Activated naive CD4-positive, alpha-beta T cell treated with anti-CD3 and anti-CD28 coated beads for 36 hours (primary cell): ENCODE measurements at regions of chr21 and their contacts with region 1.

Region 1: GRCh38 chr21:27700974-27701614 is 734.2 kb upstream of the ADAMTS5 start:
- DNase-seq: peak; percentile 80
- H3K4me3 Mint-ChIP-seq: no peak overlapping the region
- H3K27ac Mint-ChIP-seq: no peak overlapping the region
- H3K4me1 Mint-ChIP-seq: peaks cover 2% of the 10 kb centered on the region
- H3K27me3 Mint-ChIP-seq: no peaks in the 10 kb centered on the region

Region 2: DNA sequence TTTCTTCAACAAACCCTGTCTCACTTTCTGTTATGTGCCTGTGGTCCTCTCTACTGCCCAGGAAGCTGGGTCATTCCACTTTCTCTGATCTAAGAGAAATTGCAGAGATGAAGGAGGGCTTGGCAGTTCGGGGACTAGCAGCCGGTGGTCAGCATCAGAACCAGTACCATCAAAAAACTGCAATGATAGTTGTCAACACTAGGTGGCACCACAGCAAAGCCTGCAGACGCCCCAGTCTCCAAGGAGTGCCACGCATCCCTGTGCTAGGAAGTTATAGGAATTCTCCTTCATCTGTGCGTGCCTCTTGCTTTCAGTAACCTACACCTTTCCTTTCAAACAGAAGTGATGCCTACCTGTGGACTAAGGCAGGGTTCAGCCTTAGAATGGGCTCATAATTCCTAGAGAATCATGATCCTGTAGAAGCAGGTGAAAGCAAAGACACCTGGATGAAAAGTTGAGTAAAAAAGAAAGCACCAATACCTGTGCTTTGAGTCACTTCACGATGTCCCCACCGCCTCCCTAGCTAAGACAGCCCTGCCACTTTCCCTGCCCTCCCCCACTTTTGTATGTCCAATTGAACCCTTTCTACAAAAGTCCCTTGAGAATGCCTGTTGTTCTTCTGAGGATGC is 985.1 kb before region 1 on chr21:
- CTCF ChIA-PET with region 1: no interaction called
- intact Hi-C with region 1: loop called (anchors 5 kb)
- DNase-seq: peak; percentile 30
- H3K4me3 Mint-ChIP-seq: no peak overlapping the region
- H3K27ac Mint-ChIP-seq: no peak overlapping the region
- H3K4me1 Mint-ChIP-seq: no peaks in the 10 kb centered on the region
- H3K27me3 Mint-ChIP-seq: peaks cover 10% of the 10 kb centered on the region

Region 3: DNA sequence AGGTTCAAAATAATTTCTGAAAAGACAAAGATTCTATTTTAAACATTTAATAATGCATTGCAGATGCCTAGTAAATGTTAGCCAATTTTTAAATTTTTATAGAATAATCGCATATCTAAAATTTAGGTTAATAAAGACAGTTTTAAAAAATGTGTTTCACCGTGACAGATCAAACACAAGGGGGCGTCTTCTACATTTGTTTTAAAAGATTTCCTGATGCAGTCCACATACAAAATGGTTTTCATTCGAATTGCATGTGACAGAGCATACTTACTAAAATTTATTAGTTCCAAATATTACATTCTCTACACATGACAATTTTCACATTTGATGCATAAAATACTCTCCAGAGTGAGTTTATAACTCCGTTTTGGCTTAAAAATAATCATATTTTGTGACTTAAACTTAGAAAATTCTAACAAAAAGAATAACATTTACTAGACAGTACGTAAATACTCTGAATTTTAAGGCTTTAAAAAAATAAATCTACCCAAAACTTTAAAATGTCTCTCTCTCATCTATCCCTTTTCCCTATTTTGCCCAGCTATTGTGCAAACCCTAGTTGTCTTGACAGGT is 931.4 kb before region 1 on chr21:
- CTCF ChIA-PET with region 1: no interaction called
- intact Hi-C with region 1: loop called (anchors 2 kb)
- DNase-seq: no peak
- H3K4me3 Mint-ChIP-seq: no peak overlapping the region
- H3K27ac Mint-ChIP-seq: no peak overlapping the region
- H3K4me1 Mint-ChIP-seq: no peaks in the 10 kb centered on the region
- H3K27me3 Mint-ChIP-seq: peaks cover 2% of the 10 kb centered on the region

Region 4: DNA sequence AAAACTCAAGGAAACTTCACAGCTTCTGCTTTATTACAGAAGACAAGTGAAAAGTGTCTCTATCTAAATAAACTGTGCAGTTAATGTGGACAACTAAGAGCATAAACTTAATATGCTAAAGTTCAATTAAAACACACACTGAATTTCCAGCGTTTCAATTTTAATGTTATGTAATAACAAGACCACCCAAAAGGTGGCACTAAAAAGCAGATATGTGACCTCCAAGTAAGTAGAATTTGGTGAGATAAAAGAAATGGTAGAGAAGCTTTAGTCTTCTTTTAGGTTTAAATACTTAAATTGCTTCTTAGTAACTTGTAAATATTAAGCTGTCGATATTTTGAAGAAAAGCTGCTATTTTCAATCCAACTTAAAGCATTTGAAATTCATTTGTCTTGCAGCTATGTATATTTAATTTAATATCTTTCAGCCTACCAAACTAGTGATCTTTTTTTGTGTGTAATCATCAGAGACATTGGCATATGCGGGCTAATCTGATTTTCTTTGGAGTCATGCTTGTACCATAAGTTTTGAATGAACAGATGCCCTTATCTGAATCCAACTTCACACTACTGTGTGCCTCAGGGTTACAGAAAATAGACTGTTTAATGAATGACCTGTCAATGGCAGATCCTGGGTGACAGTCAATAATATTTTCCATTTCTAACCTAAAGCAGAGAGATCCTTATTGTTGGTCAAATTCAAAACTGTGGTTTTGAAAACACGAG is 819.4 kb before region 1 on chr21:
- CTCF ChIA-PET with region 1: no interaction called
- intact Hi-C with region 1: loop called (anchors 1 kb)
- DNase-seq: no peak
- H3K4me3 Mint-ChIP-seq: no peak overlapping the region
- H3K27ac Mint-ChIP-seq: no peak overlapping the region
- H3K4me1 Mint-ChIP-seq: no peaks in the 10 kb centered on the region
- H3K27me3 Mint-ChIP-seq: peaks cover 12% of the 10 kb centered on the region

Region 5: DNA sequence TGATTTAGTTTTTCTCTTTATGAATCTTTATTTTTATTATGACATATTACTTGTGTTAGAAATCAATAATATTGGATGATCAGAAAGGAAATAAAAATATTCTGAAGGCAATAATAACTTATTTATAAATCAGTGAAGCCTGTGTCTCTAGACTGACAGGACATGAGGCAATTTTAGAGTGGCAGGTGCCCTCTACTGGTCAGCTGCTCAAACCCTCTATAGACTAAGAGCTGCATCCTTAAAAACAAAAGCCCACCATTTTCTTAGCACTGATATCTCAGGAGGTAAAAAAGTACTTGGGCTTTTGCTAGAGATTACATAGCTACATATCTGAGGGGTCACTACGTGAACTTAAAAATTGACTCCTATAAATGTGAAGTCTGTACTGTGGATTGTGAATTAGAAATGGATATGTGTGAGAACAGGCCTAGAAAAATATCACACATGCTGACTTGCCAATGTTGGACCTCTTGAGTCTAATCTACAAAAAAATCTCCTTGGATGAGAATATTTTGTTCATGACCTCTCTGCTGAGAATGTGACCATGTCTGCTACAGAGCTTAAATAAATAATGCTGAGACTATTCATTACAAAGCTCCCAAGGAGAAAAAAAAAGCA is 136.3 kb before region 1 on chr21:
- CTCF ChIA-PET with region 1: no interaction called
- intact Hi-C with region 1: loop called (anchors 5 kb)
- DNase-seq: peak; percentile 16
- H3K4me3 Mint-ChIP-seq: no peak overlapping the region
- H3K27ac Mint-ChIP-seq: no peak overlapping the region
- H3K4me1 Mint-ChIP-seq: no peaks in the 10 kb centered on the region
- H3K27me3 Mint-ChIP-seq: no peaks in the 10 kb centered on the region

Region 6: DNA sequence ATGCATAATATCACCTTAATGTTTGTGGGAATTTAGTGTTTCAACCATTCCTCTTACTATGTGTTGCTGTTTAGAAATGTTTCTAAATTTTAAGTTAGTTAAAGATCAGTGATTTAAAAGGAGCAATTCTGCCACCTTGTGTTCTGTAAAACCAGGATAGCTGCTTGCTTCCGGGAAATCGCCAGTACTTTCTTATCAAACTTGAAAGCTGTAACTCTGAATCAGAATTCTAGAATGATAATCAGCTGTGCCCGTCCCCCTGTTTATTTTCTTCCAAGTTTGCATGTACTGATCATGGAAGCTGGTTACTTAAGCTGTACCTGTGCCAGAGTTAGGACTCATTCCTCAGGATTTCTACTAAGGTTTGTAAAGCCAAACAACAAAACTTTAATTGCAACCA is 635.2 kb after region 1 on chr21:
- CTCF ChIA-PET with region 1: no interaction called
- intact Hi-C with region 1: loop called (anchors 2 kb)
- DNase-seq: no peak
- H3K4me3 Mint-ChIP-seq: no peak overlapping the region
- H3K27ac Mint-ChIP-seq: no peak overlapping the region
- H3K4me1 Mint-ChIP-seq: peaks cover 2% of the 10 kb centered on the region
- H3K27me3 Mint-ChIP-seq: no peaks in the 10 kb centered on the region